Mammary epithelial cell (primary cell): ENCODE measurements at regions of chr12 and their contacts with region 1.

Region 1: GRCh38 chr12:52909256-52910195 is 4.7 kb upstream of the KRT8 start:
- DNase-seq: no peak
- H3K4me3 ChIP-seq: no peak overlapping the region
- H3K27ac ChIP-seq: peak overlapping the region; percentile 84
- H3K4me1 ChIP-seq: peaks cover 43% of the 10 kb centered on the region
- H3K27me3 ChIP-seq: no peaks in the 10 kb centered on the region
- CTCF ChIP-seq: no peak

Region 2: GRCh38 chr12:52925717-52926595 is 16.4 kb after region 1 on chr12:
- CTCF ChIA-PET with region 1: no interaction called
- dilution Hi-C with region 1: no loop called
- in situ Hi-C with region 1: no loop called
- intact Hi-C with region 1: loop called (anchors 2 kb)
- DNase-seq: peak; percentile 81
- H3K4me3 ChIP-seq: no peak overlapping the region
- H3K27ac ChIP-seq: peak overlapping the region; percentile 62
- H3K4me1 ChIP-seq: peaks cover 36% of the 10 kb centered on the region
- H3K27me3 ChIP-seq: no peaks in the 10 kb centered on the region
- CTCF ChIP-seq: no peak